SK-N-SH (cell line): ENCODE measurements at regions of chr7 and their contacts with region 1.

Region 1: GRCh38 chr7:155009570-155010157 is 6.7 kb upstream of the PAXIP1 start:
- DNase-seq: peak; percentile 37
- H3K4me3 ChIP-seq: 0 out of 4 replicates have a peak overlapping the region, but pooled peaks of 1 of the 2 experiments have one; percentile 30
- H3K27ac ChIP-seq: no peak overlapping the region
- H3K4me1 ChIP-seq: no peaks in the 10 kb centered on the region; a peak in 1 of 4 replicates
- H3K27me3 ChIP-seq: no peaks in the 10 kb centered on the region
- CTCF ChIP-seq: peak; percentile 67
- EP300 ChIP-seq: no peak
- RAD21 ChIP-seq: no peak

Region 2: DNA sequence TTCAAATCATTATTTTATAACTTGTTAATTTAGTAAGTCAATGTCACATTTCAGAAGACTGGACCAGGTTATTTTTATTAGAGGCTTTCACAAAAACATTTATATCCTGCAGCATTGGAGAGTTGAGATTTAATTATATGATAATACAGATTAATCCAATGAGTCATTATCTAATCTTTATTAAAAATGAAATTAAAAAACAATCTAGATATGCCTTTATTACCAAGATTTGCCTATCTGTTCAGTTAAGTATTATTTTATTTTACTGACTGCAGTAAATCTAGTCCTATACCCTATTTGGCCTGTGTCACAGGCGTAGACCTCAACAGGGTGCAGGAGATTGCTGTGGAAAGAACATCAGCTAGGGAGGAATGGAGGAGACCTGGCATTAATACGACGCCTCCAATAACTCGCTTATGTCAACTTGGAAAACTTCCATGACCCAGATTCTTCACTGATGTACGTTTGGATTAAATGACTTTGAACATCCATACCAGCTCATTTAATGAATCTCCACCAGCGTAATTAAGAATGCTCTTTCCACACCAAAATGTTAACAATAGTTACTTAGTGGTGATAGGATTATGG is 25.0 kb before region 1 on chr7:
- CTCF ChIA-PET with region 1: interaction called, 10 read pairs
- POLR2A ChIA-PET with region 1: no interaction called
- DNase-seq: peak; percentile 67
- H3K4me3 ChIP-seq: no peak overlapping the region
- H3K27ac ChIP-seq: no peak overlapping the region
- H3K4me1 ChIP-seq: peaks cover 0 to 10% of the 10 kb centered on the region in 2 experiments; a peak in 2 of 4 replicates
- H3K27me3 ChIP-seq: no peaks in the 10 kb centered on the region
- CTCF ChIP-seq: no peak
- EP300 ChIP-seq: peak in 1 of 2 experiments; percentile 43; a peak in 1 of 4 replicates
- RAD21 ChIP-seq: no peak

Region 3: GRCh38 chr7:155020996-155021395 is 11.3 kb after region 1 on chr7:
- CTCF ChIA-PET with region 1: interaction called, 13 read pairs
- POLR2A ChIA-PET with region 1: no interaction called
- DNase-seq: no peak
- H3K4me3 ChIP-seq: no peak overlapping the region
- H3K27ac ChIP-seq: no peak overlapping the region
- H3K4me1 ChIP-seq: no peaks in the 10 kb centered on the region
- H3K27me3 ChIP-seq: peaks cover 12% of the 10 kb centered on the region
- CTCF ChIP-seq: no peak
- EP300 ChIP-seq: no peak
- RAD21 ChIP-seq: no peak